Activated CD8-positive, alpha-beta memory T cell treated with anti-CD3 and anti-CD28 coated beads, Interleukin-2, amount 10 ng/mL, durations not matched to agents 7 days and 5 days (primary cell): ENCODE measurements at regions of chr2 and their contacts with region 1.

Region 1: DNA sequence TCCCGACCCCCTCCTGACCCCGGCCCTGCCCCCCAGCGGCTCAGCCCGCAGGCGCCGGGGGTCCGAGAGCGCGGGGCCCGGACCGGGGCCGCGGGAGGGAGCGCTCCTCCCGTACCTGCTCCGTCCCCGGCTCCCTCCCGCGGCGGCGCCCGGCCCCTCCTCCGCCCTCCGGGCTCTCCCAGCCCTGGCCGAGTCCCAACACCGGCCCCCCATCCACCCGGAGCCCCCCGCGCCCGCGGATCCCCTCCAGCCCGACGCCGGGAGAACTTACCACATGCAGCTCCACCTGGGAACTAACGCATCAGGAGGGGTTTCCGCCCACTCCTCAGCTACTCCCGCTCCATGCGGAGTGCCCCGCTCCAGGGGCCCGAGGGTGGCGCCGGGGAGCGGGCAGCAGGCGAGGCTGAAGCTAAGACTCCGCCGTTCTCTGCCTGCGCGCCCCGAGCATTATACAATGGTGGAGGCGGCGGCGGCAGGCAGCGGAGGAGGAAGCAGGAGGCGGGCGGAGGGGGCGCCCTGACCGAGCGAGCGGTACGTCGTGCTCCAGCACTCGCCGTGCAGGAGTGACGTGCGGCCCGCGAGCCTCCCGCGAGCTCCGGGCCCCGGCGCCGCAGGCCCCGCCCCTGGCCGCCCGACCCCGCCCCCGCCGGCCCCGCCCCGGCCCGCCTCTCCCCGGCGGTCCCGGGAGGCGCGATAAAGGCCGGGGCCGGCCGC is at the start of gene SERTAD2:
- DNase-seq: peak; percentile 88
- ATAC-seq: peak; percentile 89
- H3K4me3 Mint-ChIP-seq: peak within 1 kb of the TSS; percentile 83
- H3K27ac Mint-ChIP-seq: peak within 1 kb of the TSS; percentile 91
- H3K4me1 Mint-ChIP-seq: peaks cover 53% of the 10 kb centered on the region
- H3K27me3 Mint-ChIP-seq: no peaks in the 10 kb centered on the region
- total RNA-seq, gene SERTAD2: 24.3 to 53.7 TPM

Region 2: DNA sequence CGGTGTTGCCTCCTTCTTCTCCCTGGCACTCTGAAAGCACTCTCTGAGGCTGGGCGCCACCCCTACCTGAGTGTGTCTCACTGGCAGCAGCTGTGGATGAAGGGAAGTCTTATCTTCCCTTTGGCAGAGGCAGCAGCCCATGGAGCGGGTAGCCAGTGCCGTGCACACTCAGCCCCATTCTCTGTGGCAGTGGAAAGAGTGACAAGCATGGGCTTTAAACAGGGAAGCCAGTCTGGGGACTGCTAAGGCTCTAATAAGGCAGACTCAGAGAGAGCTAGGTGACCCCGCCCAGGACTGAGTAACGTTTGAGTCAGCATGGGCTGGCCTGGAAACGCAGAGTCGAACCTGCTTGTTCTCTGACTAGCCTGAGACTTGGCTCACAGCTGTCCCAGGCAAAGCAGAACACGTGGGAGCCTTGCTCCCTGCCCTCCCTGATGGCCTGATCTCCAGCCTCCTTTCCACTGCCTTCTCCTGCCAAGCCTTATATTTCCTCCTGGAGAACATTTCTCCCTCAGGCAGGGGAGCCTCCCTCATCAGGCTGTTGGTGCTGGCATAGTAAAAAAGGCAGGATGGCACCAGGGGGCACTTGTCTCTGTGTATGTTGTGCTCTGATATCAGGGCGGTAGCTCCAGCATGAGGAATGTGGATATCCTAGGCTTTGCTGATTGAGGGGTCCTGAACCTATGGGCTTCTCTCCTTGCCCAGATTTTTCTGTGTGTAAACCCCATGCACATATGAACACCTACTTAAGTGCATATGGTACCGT is 293.4 kb before region 1 on chr2:
- CTCF ChIA-PET with region 1: no interaction called
- DNase-seq: peak; percentile 73
- ATAC-seq: peak; percentile 94
- H3K4me3 Mint-ChIP-seq: no peak overlapping the region
- H3K27ac Mint-ChIP-seq: no peak overlapping the region
- H3K4me1 Mint-ChIP-seq: peaks cover 10% of the 10 kb centered on the region
- H3K27me3 Mint-ChIP-seq: peaks cover 43% of the 10 kb centered on the region

Region 3: GRCh38 chr2:64666810-64667438 is 13.4 kb after region 1 on chr2:
- CTCF ChIA-PET with region 1: interaction called, 37 read pairs
- DNase-seq: no peak
- ATAC-seq: peak; percentile 58
- H3K4me3 Mint-ChIP-seq: no peak overlapping the region
- H3K27ac Mint-ChIP-seq: peak overlapping the region; percentile 76
- H3K4me1 Mint-ChIP-seq: peaks cover 25% of the 10 kb centered on the region
- H3K27me3 Mint-ChIP-seq: no peaks in the 10 kb centered on the region

Region 4: DNA sequence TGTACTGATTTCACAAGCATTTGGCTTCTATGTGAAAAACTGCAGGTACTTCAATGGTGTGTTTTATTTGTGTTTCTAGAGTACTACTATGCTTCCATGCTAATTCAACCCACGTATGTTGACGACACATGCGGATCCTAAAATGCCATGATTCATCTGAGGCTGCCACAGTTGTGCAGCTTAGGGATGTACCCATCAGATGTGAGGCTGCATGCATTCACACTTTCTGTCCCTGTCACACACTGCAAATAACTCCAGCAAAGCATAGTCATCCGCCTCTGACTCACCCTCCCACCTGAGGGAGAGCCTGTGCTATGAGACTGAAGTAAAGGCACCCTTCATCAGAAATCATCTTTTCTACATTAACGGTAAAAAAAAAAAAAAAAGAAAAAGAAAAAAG is 22.4 kb after region 1 on chr2:
- CTCF ChIA-PET with region 1: interaction called, 27 read pairs
- DNase-seq: peak; percentile 60
- ATAC-seq: peak; percentile 82
- H3K4me3 Mint-ChIP-seq: no peak overlapping the region
- H3K27ac Mint-ChIP-seq: no peak overlapping the region
- H3K4me1 Mint-ChIP-seq: peaks cover 33% of the 10 kb centered on the region
- H3K27me3 Mint-ChIP-seq: no peaks in the 10 kb centered on the region

Region 5: GRCh38 chr2:64695721-64696261 is 42.3 kb after region 1 on chr2:
- CTCF ChIA-PET with region 1: interaction called, 12 read pairs
- DNase-seq: no peak
- ATAC-seq: no peak
- H3K4me3 Mint-ChIP-seq: no peak overlapping the region
- H3K27ac Mint-ChIP-seq: no peak overlapping the region
- H3K4me1 Mint-ChIP-seq: peaks cover 52% of the 10 kb centered on the region
- H3K27me3 Mint-ChIP-seq: peaks cover 2% of the 10 kb centered on the region

Region 6: DNA sequence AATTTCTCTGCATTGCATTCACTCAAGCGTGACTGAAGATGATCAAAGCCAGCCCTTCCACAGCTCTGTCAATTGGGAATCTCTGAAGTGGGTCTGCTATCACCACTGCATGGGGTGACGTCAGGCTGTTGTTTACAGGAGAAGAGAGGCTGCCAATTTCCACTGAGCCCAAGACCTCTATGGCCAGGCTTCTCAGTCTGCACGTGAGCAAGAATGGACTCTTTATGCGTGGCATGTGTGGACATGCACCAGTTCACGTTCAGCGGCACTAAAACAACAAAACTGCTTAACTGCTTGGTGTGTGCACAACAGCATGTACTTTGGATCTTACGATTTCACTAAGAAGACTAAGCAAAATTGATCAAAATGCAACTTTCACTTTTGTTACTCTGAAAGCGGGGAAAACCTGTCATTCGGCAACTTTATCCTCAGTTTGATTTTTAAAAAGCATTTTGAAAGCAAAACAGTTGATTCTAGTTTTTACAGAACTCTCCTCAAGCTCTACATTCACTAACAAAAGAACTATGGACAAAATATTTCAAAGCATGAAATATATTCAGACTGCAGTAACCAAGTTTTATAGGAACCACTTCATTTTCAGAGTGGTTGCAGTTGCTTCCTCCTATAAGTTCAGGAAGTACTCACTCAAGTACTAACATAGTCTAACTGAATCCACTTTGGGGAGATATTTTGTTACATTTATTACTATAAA is 77.2 kb after region 1 on chr2:
- CTCF ChIA-PET with region 1: interaction called, 55 read pairs
- DNase-seq: peak; percentile 68
- ATAC-seq: peak; percentile 61
- H3K4me3 Mint-ChIP-seq: peak overlapping the region; percentile 72
- H3K27ac Mint-ChIP-seq: peak overlapping the region; percentile 90
- H3K4me1 Mint-ChIP-seq: peaks cover 67% of the 10 kb centered on the region
- H3K27me3 Mint-ChIP-seq: no peaks in the 10 kb centered on the region

Region 7: DNA sequence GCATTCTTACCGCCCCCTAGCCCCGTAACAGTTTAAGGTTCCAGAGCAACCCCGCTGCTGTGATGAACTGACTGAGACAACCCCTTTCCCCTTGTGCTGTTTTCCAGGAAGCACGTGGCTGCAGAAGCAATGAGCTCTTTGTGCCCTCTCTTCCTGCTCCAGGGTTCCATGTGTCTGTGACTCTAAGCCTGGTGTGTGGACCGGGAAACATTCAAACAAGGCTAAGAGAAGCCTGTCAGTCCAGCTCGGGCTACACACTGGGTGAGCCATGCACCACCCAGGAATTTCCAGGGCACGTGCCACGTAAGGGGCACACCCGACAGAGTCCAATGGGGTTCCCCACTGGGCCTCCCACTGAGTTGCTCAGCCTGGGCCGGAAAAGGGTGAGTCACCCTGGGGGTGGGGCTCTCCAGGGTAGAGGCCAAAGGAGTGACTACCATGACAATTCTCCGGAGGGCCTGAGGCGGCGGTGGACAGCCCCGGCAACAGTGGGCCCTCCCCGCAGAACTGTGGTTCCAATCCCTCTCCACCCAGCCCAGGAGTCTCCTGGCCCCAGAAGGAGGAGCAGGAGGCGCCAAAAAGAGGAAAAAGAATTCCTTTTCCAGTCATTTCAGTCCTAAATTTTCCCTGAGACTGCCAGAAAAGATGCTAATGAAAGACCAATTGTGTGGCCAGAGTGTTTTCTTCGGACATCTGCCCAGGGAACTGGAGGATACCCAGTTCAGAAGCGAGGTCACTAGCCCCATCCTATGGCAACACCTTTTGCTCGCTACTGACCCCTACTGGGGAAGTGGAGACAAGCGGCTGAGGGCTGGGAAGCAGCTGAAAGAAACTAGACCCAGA is 177.8 kb after region 1 on chr2:
- CTCF ChIA-PET with region 1: interaction called, 52 read pairs
- DNase-seq: peak; percentile 91
- ATAC-seq: peak; percentile 97
- H3K4me3 Mint-ChIP-seq: peak overlapping the region; percentile 52
- H3K27ac Mint-ChIP-seq: peak overlapping the region; percentile 83
- H3K4me1 Mint-ChIP-seq: peaks cover 21% of the 10 kb centered on the region
- H3K27me3 Mint-ChIP-seq: peaks cover 10% of the 10 kb centered on the region

Region 8: GRCh38 chr2:64888591-64889309 is 235.2 kb after region 1 on chr2:
- CTCF ChIA-PET with region 1: no interaction called
- DNase-seq: no peak
- ATAC-seq: no peak
- H3K4me3 Mint-ChIP-seq: no peak overlapping the region
- H3K27ac Mint-ChIP-seq: no peak overlapping the region
- H3K4me1 Mint-ChIP-seq: no peaks in the 10 kb centered on the region
- H3K27me3 Mint-ChIP-seq: peaks cover 20% of the 10 kb centered on the region